Activated CD8-positive, alpha-beta memory T cell treated with anti-CD3 and anti-CD28 coated beads, Interleukin-2, amount 10 ng/mL, durations not matched to agents 7 days and 5 days (primary cell): ENCODE measurements at regions of chr1 and their contacts with region 1.

Region 1: GRCh38 chr1:44786138-44786840 is 1.7 kb downstream of the BEST4 start:
- DNase-seq: peak; percentile 81
- ATAC-seq: peak; percentile 67
- H3K4me3 Mint-ChIP-seq: peak overlapping the region; percentile 57
- H3K27ac Mint-ChIP-seq: peak overlapping the region; percentile 78
- H3K4me1 Mint-ChIP-seq: peaks cover 44% of the 10 kb centered on the region
- H3K27me3 Mint-ChIP-seq: no peaks in the 10 kb centered on the region

Region 2: DNA sequence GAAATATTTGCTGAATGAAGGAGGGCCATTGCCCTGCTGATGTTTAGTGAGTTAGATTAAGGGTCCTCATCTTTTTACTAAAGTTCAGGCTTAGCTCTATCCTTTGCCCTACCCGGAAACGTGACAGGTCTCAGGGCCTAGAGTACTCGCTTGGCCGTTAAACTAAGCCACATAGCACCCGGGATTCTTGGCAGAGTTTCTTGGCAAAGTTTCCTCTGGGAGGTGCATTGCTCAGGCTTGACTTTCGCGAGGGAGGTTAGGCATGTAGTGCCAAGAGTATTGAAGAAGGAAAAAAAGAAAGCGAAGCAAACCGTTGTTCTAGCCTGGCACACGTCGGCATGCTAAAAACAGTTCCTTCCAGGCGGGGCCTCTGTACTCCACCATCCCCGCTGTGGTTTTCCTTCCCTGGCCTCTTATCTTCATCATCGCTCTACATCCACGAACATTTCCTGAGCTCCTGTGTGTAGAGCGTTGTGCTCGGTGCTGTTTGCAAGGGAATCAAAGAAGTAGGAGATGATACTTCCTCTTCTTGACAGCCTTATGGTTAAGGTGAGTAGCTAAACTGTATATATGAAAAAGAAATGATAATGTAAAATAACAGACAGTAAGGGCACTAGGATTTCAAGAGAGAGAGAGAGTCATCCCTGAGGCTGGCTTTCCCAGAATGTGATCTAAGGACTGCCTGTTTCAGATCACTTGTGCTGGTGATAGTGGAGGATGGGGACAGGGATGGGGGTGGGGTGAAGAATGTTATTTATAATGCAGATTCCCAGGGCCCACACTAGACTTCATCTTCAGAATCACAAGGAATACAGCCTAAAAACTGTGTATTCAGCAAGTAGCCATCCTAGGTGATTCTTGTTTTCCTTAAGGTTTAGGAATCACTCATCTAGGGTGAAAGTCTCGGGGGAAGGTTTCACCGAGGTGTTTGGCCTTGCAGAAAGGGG is 362.4 kb before region 1 on chr1:
- CTCF ChIA-PET with region 1: no interaction called
- DNase-seq: no peak
- ATAC-seq: no peak
- H3K4me3 Mint-ChIP-seq: no peak overlapping the region
- H3K27ac Mint-ChIP-seq: no peak overlapping the region
- H3K4me1 Mint-ChIP-seq: no peaks in the 10 kb centered on the region
- H3K27me3 Mint-ChIP-seq: peaks cover 82% of the 10 kb centered on the region

Region 3: DNA sequence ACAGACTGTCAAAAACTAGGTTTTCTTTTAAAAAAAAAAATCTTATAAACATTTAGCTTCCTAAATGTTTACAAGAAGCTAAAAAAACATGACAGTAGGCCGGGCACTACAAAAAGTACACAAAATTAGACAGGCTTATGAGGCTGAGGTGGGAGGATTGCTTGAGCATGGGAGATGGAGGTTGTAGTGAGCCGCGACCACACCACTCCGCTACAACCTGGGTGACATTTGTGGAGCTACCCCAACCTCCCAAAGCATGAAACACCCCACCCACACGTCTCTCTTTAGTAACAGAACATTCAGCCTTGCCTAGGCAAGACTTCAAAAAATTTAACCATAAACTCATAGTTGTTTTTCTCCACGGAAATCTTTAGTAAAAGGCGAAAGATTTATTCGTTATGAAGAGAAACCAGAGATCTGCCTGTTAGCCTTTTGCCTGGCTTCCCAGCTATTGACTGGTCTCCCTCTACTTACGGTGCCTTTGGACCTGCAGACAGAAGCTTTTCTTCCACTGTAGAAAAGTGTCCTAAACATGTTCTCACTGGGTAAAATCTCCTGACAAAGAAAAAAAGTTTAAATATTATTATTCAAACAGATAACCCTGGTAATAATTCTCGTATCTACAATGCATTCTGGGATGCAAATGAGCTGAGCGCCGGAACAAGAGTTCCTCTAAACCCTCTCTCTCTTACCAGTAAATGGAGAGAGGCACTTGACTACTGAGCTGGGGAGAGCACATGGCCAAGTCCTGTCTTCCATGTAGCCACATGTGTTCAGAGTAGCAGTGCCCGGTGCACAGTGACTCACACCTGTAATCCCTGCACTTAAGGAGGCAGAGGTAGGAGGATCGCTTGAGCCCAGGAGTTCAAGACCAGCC is 64.6 kb before region 1 on chr1:
- CTCF ChIA-PET with region 1: interaction called, 60 read pairs
- DNase-seq: peak; percentile 93
- ATAC-seq: peak; percentile 84
- H3K4me3 Mint-ChIP-seq: peak overlapping the region; percentile 35
- H3K27ac Mint-ChIP-seq: peak overlapping the region; percentile 98
- H3K4me1 Mint-ChIP-seq: peaks cover 71% of the 10 kb centered on the region
- H3K27me3 Mint-ChIP-seq: no peaks in the 10 kb centered on the region

Region 4: DNA sequence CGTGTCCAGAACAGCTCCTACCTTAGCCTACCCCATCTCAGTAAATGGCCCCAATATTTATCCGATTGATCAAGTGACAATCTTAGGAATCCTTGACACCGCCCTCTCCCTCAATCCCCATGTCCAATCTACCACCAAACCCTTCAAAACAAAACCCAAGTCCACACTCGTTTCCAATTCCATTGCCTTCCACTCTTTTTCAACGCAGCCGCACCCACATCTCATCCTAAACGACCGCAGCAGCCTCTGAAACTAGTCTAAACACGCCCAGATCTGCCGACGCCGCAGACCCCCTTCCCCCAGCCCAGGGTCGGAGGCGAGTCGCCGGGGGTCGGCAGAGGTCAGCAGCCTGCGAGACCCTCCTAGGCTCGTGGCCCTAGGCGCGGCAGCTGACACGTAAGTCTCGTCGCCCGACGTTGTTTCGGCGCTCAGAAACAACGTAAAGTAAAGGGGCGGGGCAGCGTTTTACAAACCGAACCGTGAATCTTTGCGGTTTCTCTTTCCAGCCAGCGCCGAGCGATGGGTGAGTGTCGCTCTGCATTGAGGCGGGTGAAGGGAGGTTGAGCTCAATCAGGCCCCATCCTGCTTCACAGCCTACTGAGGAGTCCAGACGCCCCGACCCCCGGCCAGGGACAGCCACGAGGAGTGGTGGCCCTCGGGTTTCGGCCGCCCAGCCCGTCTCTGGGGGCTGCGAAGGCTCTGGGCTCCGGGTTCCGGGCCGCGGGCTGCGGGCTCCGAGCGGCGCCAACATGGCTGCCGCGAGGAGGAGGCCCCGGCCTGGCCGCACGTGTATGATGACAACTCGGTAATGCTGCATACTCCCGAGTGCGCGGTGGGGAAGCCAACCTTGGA is 11.0 kb before region 1 on chr1 and contains the start of gene RPS8:
- CTCF ChIA-PET with region 1: interaction called, 35 read pairs
- DNase-seq: peak; percentile 95
- ATAC-seq: peak; percentile 81
- H3K4me3 Mint-ChIP-seq: peak within 1 kb of the TSS; percentile 93
- H3K27ac Mint-ChIP-seq: peak within 1 kb of the TSS; percentile 93
- H3K4me1 Mint-ChIP-seq: peaks cover 37% of the 10 kb centered on the region
- H3K27me3 Mint-ChIP-seq: no peaks in the 10 kb centered on the region
- total RNA-seq, gene RPS8: 1,353 to 1,538 TPM

Region 5: GRCh38 chr1:44807262-44808062 is 21.2 kb after region 1 on chr1 and contains the start of gene DYNLT4:
- CTCF ChIA-PET with region 1: interaction called, 11 read pairs
- DNase-seq: peak; percentile 97
- ATAC-seq: peak; percentile 56
- H3K4me3 Mint-ChIP-seq: peak within 1 kb of the TSS; percentile 64
- H3K27ac Mint-ChIP-seq: peak within 1 kb of the TSS; percentile 99
- H3K4me1 Mint-ChIP-seq: peaks cover 69% of the 10 kb centered on the region
- H3K27me3 Mint-ChIP-seq: no peaks in the 10 kb centered on the region
- total RNA-seq, gene DYNLT4: 0.40 to 1.3 TPM

Region 6: DNA sequence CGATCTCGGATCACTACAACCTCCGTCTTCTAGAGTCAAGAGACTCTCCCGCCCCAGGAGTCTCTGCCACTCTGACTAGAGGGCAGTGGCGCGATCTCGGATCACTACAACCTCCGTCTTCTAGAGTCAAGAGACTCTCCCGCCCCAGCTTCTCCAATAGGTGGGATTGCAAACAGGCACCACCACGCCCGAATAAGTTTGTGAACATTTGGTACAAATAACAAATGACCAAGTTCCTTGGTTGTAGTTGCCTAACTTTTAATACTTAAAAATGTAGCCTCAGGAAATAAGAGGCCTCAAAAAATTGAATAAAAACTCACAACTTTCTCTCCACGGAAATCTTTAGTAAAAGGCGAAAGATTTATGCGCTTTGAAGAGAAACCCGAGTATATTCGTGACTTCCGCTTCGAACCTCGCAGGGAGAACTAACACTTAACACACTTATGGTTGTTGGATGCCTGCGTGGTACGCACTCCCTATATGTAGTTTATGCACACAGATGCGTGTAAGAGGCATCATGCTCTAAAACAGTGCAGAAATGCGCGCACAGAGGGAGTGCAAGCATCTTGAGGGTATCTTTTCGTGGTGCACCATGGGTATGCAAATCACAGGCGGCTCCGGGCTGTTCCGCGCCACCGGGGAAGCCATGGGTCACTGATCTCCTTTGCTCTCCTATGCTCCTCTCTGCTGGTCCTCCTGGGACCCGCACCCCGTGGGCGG is 33.5 kb after region 1 on chr1:
- CTCF ChIA-PET with region 1: interaction called, 14 read pairs
- DNase-seq: peak; percentile 95
- ATAC-seq: peak; percentile 90
- H3K4me3 Mint-ChIP-seq: peak overlapping the region; percentile 83
- H3K27ac Mint-ChIP-seq: peak overlapping the region; percentile 100
- H3K4me1 Mint-ChIP-seq: peaks cover 43% of the 10 kb centered on the region
- H3K27me3 Mint-ChIP-seq: no peaks in the 10 kb centered on the region

Region 7: GRCh38 chr1:44976252-44976651 is 190.0 kb after region 1 on chr1:
- CTCF ChIA-PET with region 1: no interaction called
- DNase-seq: no peak
- ATAC-seq: no peak
- H3K4me3 Mint-ChIP-seq: no peak overlapping the region
- H3K27ac Mint-ChIP-seq: no peak overlapping the region
- H3K4me1 Mint-ChIP-seq: peaks cover 5% of the 10 kb centered on the region
- H3K27me3 Mint-ChIP-seq: no peaks in the 10 kb centered on the region

Region 8: DNA sequence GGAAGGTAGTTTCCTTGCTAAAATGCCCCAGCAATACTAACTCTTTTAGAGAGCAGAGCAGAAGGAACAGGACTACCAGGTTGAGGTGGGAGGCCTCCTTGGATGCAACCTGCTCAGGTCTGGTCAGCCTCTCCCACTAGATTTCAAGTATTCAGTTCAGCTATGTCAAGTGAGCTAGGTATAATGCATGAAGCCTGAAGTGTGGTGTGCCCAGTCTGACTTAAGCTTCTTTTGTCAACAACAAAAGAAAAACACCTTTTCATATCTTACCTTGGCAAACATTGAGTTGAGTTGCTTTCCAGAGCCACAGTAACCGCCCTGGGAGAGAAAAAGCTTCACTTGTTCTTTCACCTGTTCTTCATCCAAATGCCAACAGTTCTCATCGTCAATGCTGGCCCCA is 273.5 kb after region 1 on chr1:
- CTCF ChIA-PET with region 1: no interaction called
- DNase-seq: no peak
- ATAC-seq: no peak
- H3K4me3 Mint-ChIP-seq: no peak overlapping the region
- H3K27ac Mint-ChIP-seq: no peak overlapping the region
- H3K4me1 Mint-ChIP-seq: peaks cover 5% of the 10 kb centered on the region
- H3K27me3 Mint-ChIP-seq: no peaks in the 10 kb centered on the region